Activated naive CD4-positive, alpha-beta T cell treated with anti-CD3 and anti-CD28 coated beads for 36 hours (primary cell): ENCODE measurements at regions of chr2 and their contacts with region 1.

Region 1: GRCh38 chr2:65064728-65065552 is 8.7 kb downstream of the CEP68 start:
- DNase-seq: peak; percentile 70
- H3K4me3 Mint-ChIP-seq: no peak overlapping the region
- H3K27ac Mint-ChIP-seq: peak overlapping the region; percentile 47
- H3K4me1 Mint-ChIP-seq: peaks cover 32% of the 10 kb centered on the region
- H3K27me3 Mint-ChIP-seq: no peaks in the 10 kb centered on the region

Region 2: DNA sequence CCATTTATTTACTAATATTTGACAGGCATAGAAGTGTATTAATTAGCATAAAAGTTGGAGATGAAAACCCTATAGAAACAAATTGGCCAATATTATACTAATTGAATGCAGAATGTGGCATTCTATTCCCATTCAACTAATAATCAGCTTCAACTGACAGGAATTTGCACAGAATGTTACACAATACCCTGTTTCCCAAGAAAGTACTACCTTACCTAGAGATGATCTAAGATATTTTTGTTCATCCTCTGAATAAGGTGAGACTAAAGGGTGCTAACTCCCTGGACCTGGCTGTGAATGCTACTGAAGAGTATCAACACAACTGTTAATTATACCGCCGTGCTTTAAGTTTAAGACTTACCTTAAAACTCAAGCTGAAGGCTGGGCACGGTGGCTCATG is 20.2 kb after region 1 on chr2:
- CTCF ChIA-PET with region 1: interaction called, 10 read pairs
- intact Hi-C with region 1: no loop called
- DNase-seq: no peak
- H3K4me3 Mint-ChIP-seq: no peak overlapping the region
- H3K27ac Mint-ChIP-seq: no peak overlapping the region
- H3K4me1 Mint-ChIP-seq: peaks cover 8% of the 10 kb centered on the region
- H3K27me3 Mint-ChIP-seq: no peaks in the 10 kb centered on the region

Region 3: GRCh38 chr2:65142515-65142914 is 77.6 kb after region 1 on chr2:
- CTCF ChIA-PET with region 1: interaction called, 9 read pairs
- intact Hi-C with region 1: loop called (anchors 1 kb)
- DNase-seq: peak; percentile 27
- H3K4me3 Mint-ChIP-seq: no peak overlapping the region
- H3K27ac Mint-ChIP-seq: no peak overlapping the region
- H3K4me1 Mint-ChIP-seq: no peaks in the 10 kb centered on the region
- H3K27me3 Mint-ChIP-seq: no peaks in the 10 kb centered on the region

Region 4: DNA sequence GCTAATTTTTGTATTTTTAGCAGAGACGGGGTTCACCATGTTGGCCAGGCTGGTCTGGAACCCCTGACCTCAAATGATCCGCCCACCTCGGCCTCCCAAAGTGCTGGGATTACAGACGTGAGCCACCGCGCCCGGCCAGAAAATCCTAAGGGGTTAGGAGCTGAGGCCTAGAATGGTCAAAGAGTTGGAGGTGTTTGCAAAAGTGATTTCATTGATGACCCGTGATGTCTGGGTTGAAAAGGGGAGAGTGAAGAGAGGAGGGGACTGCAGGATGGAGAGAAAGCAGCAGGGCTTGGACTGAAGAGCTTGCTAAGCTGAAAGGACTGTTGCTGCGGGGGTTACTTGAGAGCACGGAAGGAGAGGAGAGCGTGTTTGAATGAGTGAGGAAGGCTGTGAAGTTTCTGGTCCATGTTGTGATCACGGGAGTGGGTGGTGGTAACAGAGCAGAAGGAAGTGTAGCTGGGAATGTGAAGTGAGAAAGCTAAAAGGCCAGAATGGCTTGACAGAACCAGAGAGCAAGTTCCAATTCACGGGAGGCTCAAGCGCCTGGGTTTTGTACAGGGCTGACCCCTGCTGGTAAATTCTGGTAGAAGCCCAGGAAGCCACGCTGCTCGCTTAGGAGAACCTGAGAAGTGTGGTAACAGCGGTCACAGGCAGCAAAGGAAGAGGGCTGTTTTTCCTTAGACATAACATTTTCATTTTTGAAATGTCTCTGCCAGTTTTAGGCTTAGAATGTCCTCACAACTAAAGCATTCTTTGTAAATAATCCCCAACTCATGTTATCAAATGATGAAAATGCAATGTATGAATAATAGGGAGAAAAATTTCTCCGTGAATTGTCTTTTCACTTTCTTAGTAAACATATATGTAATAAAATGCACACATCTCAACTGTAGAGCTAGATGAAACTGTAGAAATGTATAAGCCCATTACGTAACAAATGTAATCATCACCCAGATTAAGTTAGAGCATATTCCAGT is 122.2 kb after region 1 on chr2:
- CTCF ChIA-PET with region 1: interaction called, 44 read pairs
- intact Hi-C with region 1: loop called (anchors 1 kb)
- DNase-seq: peak; percentile 81
- H3K4me3 Mint-ChIP-seq: no peak overlapping the region
- H3K27ac Mint-ChIP-seq: no peak overlapping the region
- H3K4me1 Mint-ChIP-seq: peaks cover 4% of the 10 kb centered on the region
- H3K27me3 Mint-ChIP-seq: peaks cover 5% of the 10 kb centered on the region

Region 5: DNA sequence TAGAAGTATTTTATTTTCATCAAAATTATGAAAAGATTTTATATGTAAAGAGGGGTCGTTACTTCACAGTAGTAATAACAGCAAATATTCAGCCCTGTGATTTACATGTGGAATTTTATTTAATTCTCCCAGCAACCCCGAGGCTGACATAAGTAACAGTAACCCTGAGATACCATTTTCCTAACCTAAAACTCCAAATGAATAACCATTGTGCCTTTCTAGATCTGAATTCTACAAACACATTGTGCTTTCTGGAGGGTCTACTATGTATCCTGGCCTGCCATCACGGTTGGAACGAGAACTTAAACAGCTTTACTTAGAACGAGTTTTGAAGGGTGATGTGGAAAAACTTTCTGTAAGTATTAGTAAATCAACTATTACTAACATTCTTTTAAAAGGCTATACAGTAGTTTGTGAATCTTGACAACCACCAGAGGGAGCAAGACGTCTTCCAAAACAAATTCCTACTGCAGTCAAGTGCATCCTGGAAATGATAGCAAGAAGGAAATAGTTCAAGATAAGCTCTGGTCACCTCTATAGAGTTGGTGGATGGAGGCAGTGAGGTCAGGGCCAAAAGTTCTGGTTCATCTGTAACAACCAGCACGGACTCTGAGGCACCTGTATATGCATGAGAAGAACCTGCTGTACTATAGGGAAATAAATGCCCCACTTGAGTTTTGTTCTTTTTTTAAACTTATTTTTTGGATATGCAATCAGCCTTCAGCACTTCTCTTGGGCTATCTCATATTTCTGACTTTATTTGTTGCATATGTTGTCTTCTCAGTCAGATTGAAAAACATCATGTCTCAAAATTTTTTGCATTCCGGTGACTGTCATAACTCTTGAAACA is 200.1 kb after region 1 on chr2:
- CTCF ChIA-PET with region 1: interaction called, 3 read pairs
- intact Hi-C with region 1: loop called (anchors 1 kb)
- DNase-seq: peak; percentile 27
- H3K4me3 Mint-ChIP-seq: no peak overlapping the region
- H3K27ac Mint-ChIP-seq: no peak overlapping the region
- H3K4me1 Mint-ChIP-seq: no peaks in the 10 kb centered on the region
- H3K27me3 Mint-ChIP-seq: no peaks in the 10 kb centered on the region

Region 6: DNA sequence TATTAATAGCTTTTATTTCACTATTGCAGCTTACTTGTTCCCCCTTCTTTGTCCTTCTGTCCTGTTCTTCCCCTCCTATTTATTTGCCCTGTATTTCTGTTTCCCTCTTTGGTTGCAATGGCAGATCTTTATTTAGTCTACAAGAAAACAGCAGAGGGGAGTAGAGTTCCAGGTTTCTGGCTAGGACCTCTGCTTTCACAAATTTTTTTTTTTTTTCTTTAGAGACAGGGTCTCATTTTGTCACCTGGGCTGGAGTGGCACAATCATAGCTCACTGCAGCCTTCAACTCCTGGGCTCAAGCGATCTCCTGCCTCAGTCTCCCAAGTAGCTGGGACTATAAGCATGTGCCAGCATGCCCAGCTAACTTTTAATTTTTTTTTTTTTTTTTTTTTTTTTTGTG is 555.6 kb after region 1 on chr2:
- CTCF ChIA-PET with region 1: no interaction called
- intact Hi-C with region 1: no loop called
- DNase-seq: no peak
- H3K4me3 Mint-ChIP-seq: no peak overlapping the region
- H3K27ac Mint-ChIP-seq: no peak overlapping the region
- H3K4me1 Mint-ChIP-seq: peaks cover 6% of the 10 kb centered on the region
- H3K27me3 Mint-ChIP-seq: peaks cover 19% of the 10 kb centered on the region

Region 7: GRCh38 chr2:65728477-65729190 is 663.7 kb after region 1 on chr2:
- CTCF ChIA-PET with region 1: no interaction called
- intact Hi-C with region 1: no loop called
- DNase-seq: no peak
- H3K4me3 Mint-ChIP-seq: no peak overlapping the region
- H3K27ac Mint-ChIP-seq: no peak overlapping the region
- H3K4me1 Mint-ChIP-seq: no peaks in the 10 kb centered on the region
- H3K27me3 Mint-ChIP-seq: peaks cover 2% of the 10 kb centered on the region